Right lobe of liver (tissue), 6 donors: ENCODE measurements at regions of chr19 and their contacts with region 1.

Region 1: GRCh38 chr19:1275260-1275975 is at the start of gene FAM174C:
- DNase-seq: peak; percentile 96 to 97 (median 97)
- ATAC-seq: peak; percentile 65 to 86 (median 76)
- H3K4me3 ChIP-seq: peak within 1 kb of the TSS; percentile 57 to 72 (median 70)
- H3K27ac ChIP-seq: peak within 1 kb of the TSS; percentile 84 to 97 (median 95)
- H3K4me1 ChIP-seq: peaks cover 0 to 55% (median 23%) of the 10 kb centered on the region in 4 donors
- H3K27me3 ChIP-seq: no peaks in the 10 kb centered on the region
- CTCF ChIP-seq: peak in 1 of 4 donors; percentile 5
- POLR2A ChIP-seq: peak; percentile 93
- total RNA-seq, gene FAM174C: 34.0 to 103 (median 43.8) TPM

Region 2: GRCh38 chr19:1205114-1206062 is 70.0 kb before region 1 on chr19 and contains the start of gene STK11:
- intact Hi-C with region 1: no loop called
- DNase-seq: peak; percentile 99 to 100 (median 100)
- ATAC-seq: peak; percentile 82 to 93 (median 92)
- H3K4me3 ChIP-seq: peak within 1 kb of the TSS; percentile 61 to 70 (median 66)
- H3K27ac ChIP-seq: peak within 1 kb of the TSS; percentile 80 to 84 (median 81)
- H3K4me1 ChIP-seq: peaks cover 0 to 35% (median 16%) of the 10 kb centered on the region in 4 donors
- H3K27me3 ChIP-seq: no peaks in the 10 kb centered on the region
- CTCF ChIP-seq: no peak
- POLR2A ChIP-seq: peak; percentile 81
- total RNA-seq, gene STK11: 23.8 to 34.0 (median 29.5) TPM

Region 3: DNA sequence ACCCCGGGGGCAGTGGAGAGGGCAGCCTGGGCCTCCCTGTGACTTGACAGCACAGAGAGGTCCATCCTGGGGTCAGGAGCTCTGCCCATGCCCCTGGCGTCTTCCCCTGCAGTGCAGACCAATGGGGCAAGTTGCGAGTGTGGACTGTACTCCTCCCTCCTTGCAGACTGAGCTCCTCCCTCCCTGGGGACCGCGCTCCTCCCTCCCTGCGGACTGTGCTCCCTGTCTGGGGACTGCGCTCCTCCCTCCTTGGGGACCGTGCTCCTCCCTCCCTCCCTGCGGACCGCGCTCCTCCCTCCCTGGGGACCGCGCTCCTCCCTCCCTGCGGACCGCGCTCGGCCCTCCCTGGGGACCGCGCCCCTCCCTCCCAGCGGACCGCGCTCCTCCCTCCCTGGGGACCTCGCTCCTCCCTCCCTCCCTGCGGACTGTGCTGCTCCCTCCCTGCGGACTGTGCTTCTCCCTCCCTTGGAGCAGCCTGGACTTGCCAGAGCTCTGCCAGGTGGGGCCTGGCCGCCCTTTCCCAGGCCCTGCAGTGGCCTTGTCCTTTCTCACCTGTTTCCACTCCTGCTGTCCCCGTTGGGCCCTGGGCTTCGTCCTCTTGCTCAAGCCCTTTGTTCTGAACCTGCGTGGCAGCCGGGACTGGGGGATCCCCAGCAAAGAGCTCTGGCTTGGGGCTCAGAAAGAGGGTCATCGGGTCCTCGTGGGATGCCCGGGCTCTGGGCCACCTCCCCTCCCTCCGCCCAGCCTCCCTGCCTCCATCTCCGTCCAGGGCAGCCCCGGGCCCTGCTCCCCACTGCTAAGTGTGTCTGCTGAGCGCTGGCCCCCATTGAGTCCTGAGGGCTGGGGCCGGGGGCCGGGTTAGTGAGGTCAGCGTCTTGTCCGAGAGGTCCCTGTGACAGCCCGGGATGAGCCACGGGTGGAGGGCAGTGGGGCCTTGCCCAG is 119.1 kb after region 1 on chr19:
- intact Hi-C with region 1: loop called (anchors 5 to 10 kb)
- DNase-seq: peak; percentile 54 to 89 (median 88)
- ATAC-seq: peak; percentile 42 to 70 (median 60)
- H3K4me3 ChIP-seq: peak overlapping the region in 2 of 3 donors; percentile 13 to 29
- H3K27ac ChIP-seq: peak overlapping the region in 2 of 3 donors; percentile 65 to 66
- H3K4me1 ChIP-seq: peaks cover 0 to 41% (median 20%) of the 10 kb centered on the region in 4 donors
- H3K27me3 ChIP-seq: no peaks in the 10 kb centered on the region
- CTCF ChIP-seq: no peak
- POLR2A ChIP-seq: no peak

Region 4: DNA sequence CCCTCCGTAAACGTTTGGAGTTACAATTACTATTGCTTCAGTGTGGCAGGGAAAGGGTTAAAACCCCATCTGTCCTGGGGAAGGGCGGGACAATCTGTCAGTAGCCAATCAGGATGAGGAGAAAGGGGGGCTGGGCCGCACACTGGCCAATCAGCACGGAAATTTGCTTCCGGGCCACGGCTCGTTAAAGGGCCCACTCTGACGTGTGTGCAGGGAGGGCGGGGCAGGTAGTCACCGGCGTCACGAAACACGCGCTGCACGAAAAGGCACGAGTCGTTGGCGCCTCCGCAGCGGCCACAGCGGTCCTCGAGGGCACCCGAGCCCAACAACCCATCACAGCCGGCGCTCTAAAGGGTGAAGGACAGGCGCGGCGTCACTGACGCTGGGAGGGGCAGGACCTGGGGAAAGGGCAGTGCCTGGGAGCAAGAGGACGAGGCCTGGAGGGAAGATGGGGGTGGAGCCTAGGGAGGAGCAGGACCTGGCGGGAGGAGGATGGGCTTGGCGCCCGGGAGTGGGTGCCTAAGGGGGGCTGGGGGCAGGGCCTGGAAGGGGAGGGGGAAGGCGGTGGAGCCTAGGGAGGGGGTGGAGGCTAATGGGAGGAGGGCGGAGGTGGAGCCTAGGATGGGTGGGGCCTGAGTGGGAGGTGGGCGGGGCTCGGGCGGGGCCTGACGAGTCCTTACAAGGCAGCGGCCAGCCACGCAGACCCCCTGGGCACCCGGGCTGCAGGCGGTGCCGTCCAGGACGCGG is 232.5 kb after region 1 on chr19:
- intact Hi-C with region 1: loop called in 1 of 2 experiments (anchors 10 kb)
- DNase-seq: peak; percentile 88 to 90 (median 88)
- ATAC-seq: peak; percentile 83 to 91 (median 85)
- H3K4me3 ChIP-seq: peak overlapping the region; percentile 31 to 50 (median 45)
- H3K27ac ChIP-seq: peak overlapping the region in 2 of 3 donors; percentile 47 to 57
- H3K4me1 ChIP-seq: peaks cover 0 to 4% (median 1%) of the 10 kb centered on the region in 4 donors
- H3K27me3 ChIP-seq: no peaks in the 10 kb centered on the region
- CTCF ChIP-seq: no peak
- POLR2A ChIP-seq: no peak